Sciatic nerve (tissue), 2 donors: ENCODE measurements at regions of chr11 and their contacts with region 1.

Region 1: GRCh38 chr11:64152841-64153691 is 12.8 kb downstream of the MACROD1 start:
- DNase-seq: peak; percentile 79
- ATAC-seq: peak; percentile 71

Region 2: DNA sequence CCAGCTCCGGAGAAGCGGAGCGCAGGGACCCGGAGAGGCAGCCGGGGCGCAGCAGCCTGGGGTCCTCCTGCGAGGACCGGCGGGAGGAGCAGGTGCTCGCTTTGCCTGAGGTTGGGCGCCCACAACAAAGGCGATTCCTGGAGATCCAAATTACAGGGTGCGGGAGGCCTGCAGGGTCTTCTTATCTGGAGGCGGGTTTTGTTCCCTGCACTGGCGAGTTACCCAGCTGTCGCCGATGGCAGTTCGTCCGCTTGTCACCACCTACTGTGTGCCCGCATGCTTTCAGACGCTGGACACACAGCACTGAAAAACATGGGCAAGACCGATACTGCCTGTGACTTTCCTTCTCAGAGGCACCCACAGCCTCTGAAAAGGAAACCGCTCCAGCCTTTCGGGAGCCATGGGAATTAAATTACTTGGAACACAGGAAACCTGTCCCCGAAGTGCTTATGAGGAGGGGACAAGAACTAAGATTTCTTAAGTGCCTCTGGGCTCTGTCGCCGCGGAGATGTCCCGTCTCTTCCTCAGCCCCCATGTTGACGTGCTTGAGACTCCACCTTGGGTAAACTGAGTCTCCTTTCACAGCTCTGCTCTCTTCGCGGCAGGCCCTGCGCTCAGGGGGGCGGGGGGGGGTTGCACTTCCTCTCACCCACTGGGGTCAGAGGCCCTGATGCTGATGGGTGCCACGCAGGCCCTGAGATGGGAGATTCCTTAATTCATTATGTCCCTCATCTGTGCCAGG is 383.2 kb before region 1 on chr11:
- intact Hi-C with region 1: loop called (anchors 5 kb)
- DNase-seq: no peak
- ATAC-seq: no peak

Region 3: DNA sequence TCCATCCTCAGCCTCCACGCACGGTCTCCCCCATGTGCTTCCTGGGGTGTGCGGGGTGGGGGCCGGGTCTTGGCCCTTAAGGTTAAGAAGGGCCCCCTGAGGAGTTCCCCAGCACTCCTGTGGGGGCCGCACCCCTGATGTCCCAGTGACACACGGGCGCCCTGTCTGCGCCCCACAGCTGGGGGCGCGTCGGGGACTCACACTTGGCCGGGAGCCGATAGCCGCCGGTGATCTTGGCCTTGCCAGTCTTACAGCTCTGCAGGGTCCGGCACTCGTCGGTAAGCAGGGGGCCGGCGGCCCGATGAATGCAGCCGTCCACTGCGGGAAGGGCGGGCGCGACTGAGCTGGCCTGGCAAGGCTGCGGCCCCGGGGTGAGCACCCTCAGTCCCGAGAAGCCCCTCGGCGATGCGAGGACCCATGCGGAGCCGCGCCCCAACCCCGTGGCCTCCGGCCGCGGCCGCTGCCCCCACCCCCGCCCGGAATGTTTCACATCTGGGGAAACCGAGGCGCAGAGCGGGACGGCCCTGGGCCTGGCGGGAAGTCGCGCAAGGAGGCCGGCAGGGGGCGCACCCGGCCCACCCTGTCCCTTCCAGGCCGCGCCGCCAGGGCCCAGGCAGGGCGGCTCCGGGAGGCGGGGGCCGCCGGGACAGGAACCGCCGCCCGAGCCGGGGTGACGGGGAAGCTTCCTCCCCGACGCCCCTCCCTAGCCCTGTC is 152.9 kb before region 1 on chr11:
- intact Hi-C with region 1: loop called (anchors 2 kb)
- DNase-seq: peak; percentile 82
- ATAC-seq: peak; percentile 75

Region 4: DNA sequence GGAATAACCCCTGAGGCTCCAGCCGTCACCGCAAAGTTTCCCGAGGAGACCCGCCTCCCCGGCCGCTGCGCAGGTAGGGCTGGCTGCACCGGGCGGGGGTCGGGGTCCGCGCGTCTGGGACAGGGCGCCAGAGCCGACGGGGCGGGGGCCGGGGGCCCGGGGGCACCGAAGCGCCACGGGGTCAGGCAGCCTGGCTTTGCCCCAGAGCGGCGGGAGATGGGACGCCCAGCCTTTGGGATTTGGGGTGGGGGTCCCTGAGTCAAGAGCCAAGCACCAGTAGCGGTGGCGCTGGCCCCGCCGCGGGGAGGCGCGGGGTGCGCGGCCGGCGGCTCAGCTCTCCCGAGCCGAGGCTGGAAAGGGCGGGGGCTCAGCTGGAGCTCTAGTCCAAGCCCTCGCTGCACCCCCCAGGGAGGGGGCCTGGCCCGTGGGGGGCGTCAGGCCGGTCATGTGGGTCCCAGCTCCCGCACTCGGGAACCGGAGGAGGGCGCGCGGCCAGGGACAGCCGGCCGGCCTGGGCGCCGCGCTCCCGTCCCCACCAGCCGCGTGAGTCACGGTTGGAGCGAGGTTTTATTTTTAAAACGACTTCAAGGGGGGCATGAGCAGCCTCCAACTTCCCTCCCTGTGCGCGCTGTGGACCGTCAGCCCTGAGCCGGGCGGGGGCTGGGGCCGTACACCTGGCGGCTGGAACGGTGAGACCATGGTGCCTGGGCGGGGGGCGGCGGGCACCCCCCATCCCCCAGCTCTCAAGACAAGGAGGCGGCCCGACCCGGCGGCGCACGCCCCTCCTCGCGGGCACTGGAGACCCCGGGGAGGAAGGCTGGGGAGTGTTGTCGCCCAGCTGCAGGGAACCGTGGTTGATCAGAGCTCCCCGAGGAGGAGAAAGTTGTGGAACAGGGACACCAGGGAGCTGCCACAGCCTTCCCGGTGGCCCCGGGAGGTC is 116.7 kb before region 1 on chr11:
- intact Hi-C with region 1: loop called (anchors 10 kb)
- DNase-seq: no peak
- ATAC-seq: peak; percentile 5

Region 5: GRCh38 chr11:64225612-64226506 is 72.8 kb after region 1 on chr11 and contains the starts of genes NUDT22 and TRPT1:
- intact Hi-C with region 1: no loop called
- DNase-seq: peak; percentile 96
- ATAC-seq: peak; percentile 84
- total RNA-seq, gene NUDT22: 28.0 TPM
- total RNA-seq, gene TRPT1: 20.6 TPM